ENCODE measurements at regions of chr5 and their contacts with region 1.

Region 1: DNA sequence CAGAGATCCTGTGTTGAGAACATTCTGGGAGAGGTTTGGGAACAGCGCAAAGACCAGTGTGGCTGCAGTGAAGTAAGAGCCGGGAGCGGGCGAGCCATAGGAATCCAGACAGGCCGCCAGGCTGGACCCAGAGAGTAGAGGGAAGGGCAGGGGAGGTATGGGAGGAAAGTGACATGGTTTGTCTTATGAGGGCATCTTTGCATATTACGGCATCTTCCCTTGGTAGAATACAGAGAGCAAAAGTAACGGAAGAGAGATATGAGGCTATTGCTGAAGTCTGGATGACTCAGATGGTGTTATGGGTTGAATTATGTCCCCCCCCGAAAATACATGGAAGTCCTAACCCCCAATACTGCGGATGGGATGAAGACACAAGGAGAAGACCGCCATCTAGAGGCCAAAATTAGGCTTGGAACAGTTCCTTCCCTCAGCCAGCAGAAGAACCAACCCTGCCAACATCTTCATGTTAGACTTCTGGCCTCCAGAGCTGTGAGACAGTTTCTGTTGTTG is 268.2 kb downstream of the MAST4 start:
- DNase-seq: peak; percentile 42 to 53
- H3K4me3 ChIP-seq: no peak overlapping the region
- H3K4me3 Mint-ChIP-seq: no peak overlapping the region
- H3K27ac Mint-ChIP-seq: no peak overlapping the region
- H3K4me1 ChIP-seq: no peaks in the 10 kb centered on the region
- H3K4me1 Mint-ChIP-seq: peaks cover 8% of the 10 kb centered on the region
- H3K27me3 ChIP-seq: peaks cover 2% of the 10 kb centered on the region
- H3K27me3 Mint-ChIP-seq: peaks cover 8% of the 10 kb centered on the region
- CTCF ChIP-seq: peak; percentile 59 to 62

Region 2: GRCh38 chr5:66814146-66814991 is 50.0 kb before region 1 on chr5:
- CTCF ChIA-PET with region 1: no interaction called
- POLR2A ChIA-PET with region 1: no interaction called
- intact Hi-C with region 1: loop called (anchors 1 kb)
- DNase-seq: peak in 1 of 2 experiments; percentile 57
- H3K4me3 ChIP-seq: no peak overlapping the region
- H3K4me3 Mint-ChIP-seq: no peak overlapping the region
- H3K27ac Mint-ChIP-seq: no peak overlapping the region
- H3K4me1 ChIP-seq: no peaks in the 10 kb centered on the region; the same call in 1 of the 2 replicates
- H3K4me1 Mint-ChIP-seq: peaks cover 7% of the 10 kb centered on the region
- H3K27me3 ChIP-seq: no peaks in the 10 kb centered on the region
- H3K27me3 Mint-ChIP-seq: peaks cover 29% of the 10 kb centered on the region
- CTCF ChIP-seq: peak; percentile 61 to 84

Region 3: DNA sequence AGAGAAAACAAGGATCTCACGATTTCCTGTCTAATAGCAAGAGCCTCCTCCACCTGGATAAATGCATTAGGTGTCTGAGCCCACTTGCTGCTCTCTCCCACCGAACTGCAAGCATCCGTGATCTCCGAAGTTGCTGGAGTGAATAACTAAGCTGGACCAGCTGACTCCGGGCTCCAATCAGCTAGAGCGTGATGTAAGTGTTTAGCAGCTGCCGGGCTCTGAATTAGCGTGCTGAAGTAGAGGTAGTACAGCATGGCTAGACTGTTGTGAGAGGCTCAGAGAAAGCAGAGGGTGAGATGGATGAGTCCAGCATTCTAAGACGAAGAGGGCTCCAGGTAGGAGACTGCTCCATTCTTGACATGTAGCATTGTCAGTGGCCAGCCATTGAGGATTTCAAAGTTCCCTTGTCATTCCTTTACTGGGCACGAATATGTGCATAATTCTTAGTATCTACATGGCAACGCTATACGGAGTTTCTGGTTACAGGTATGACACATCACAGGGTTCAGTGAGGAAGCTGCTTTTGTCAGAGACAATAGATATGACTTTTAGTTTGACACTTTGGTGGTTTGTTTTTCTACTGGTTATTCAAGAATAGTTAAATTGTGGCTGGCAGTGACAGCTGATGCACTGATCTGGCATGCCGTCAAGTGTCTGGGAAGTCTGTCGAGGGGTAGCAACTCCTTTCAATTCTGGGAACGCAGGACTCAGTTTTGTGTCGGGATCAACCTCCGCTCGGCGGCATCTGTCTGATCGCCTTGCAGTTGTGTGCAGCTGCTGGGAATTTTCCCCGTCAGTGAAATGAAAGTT is 35.6 kb before region 1 on chr5:
- CTCF ChIA-PET with region 1: no interaction called
- POLR2A ChIA-PET with region 1: no interaction called
- intact Hi-C with region 1: loop called (anchors 5 kb)
- DNase-seq: peak; percentile 30 to 43
- H3K4me3 ChIP-seq: 0 out of 2 replicates have a peak overlapping the region, but pooled peaks have one; percentile 1
- H3K4me3 Mint-ChIP-seq: peak overlapping the region; percentile 71
- H3K27ac Mint-ChIP-seq: no peak overlapping the region
- H3K4me1 ChIP-seq: no peaks in the 10 kb centered on the region
- H3K4me1 Mint-ChIP-seq: peaks cover 10% of the 10 kb centered on the region
- H3K27me3 ChIP-seq: no peaks in the 10 kb centered on the region
- H3K27me3 Mint-ChIP-seq: peaks cover 27% of the 10 kb centered on the region
- CTCF ChIP-seq: no peak

Region 4: GRCh38 chr5:67149951-67150523 is 285.7 kb after region 1 on chr5:
- CTCF ChIA-PET with region 1: no interaction called
- POLR2A ChIA-PET with region 1: no interaction called
- intact Hi-C with region 1: loop called (anchors 5 kb)
- DNase-seq: peak in 1 of 2 experiments; percentile 19
- H3K4me3 ChIP-seq: no peak overlapping the region
- H3K4me3 Mint-ChIP-seq: no peak overlapping the region
- H3K27ac Mint-ChIP-seq: no peak overlapping the region
- H3K4me1 ChIP-seq: peaks cover 2% of the 10 kb centered on the region; the same call in 1 of the 2 replicates
- H3K4me1 Mint-ChIP-seq: no peaks in the 10 kb centered on the region
- H3K27me3 ChIP-seq: no peaks in the 10 kb centered on the region
- H3K27me3 Mint-ChIP-seq: no peaks in the 10 kb centered on the region
- CTCF ChIP-seq: peak; percentile 9 to 68